ENCODE measurements at regions of chr20 and their contacts with region 1.

Region 1: GRCh38 chr20:54668271-54669039 is 193.1 kb downstream of the DOK5 start:
- DNase-seq: peak; percentile 34
- H3K4me3 ChIP-seq: no peak overlapping the region
- H3K27ac ChIP-seq: no peak overlapping the region
- H3K4me1 ChIP-seq: no peaks in the 10 kb centered on the region
- H3K27me3 ChIP-seq: no peaks in the 10 kb centered on the region
- CTCF ChIP-seq: peak; percentile 68 to 84
- POLR2A ChIP-seq: no peak

Region 2: DNA sequence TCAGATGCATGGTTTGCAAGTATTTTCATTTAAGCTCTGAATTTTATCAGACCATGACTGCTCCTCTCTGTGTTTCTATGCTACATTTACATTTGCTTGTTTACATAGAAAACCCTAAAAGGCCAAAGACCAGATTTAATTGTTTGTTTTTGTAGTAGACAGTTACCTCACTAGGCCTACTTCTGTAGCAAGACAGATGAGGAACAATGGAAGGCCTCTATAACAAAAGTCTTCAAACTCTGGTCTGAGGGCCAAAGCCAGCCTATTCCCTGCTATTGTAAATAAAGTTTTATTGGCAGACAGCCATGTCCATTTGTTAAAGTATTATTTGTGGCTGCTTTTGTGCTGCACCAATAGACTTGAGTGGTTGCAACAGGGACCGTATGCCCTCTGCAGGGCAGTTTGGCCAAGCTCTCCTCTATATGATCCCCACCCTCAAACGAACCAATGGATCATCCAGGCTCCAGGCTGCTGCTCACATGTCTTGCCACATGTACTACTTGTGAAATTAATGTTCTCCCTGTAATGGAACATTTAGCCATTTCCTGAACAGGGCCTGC is 11.1 kb before region 1 on chr20:
- CTCF ChIA-PET with region 1: interaction called, 17 read pairs
- POLR2A ChIA-PET with region 1: no interaction called
- dilution Hi-C with region 1: no loop called
- intact Hi-C with region 1: no loop called
- DNase-seq: no peak
- H3K4me3 ChIP-seq: no peak overlapping the region
- H3K27ac ChIP-seq: no peak overlapping the region
- H3K4me1 ChIP-seq: no peaks in the 10 kb centered on the region
- H3K27me3 ChIP-seq: peaks cover 0 to 5% of the 10 kb centered on the region in 2 experiments
- CTCF ChIP-seq: no peak
- POLR2A ChIP-seq: no peak

Region 3: GRCh38 chr20:56247948-56248782 is 1579.7 kb after region 1 on chr20 and contains the start of gene MC3R:
- CTCF ChIA-PET with region 1: no interaction called
- POLR2A ChIA-PET with region 1: no interaction called
- dilution Hi-C with region 1: no loop called
- intact Hi-C with region 1: loop called (anchors 5 kb)
- DNase-seq: peak; percentile 2
- H3K4me3 ChIP-seq: no peak within 1 kb of the TSS
- H3K27ac ChIP-seq: no peak within 1 kb of the TSS
- H3K4me1 ChIP-seq: no peaks in the 10 kb centered on the region
- H3K27me3 ChIP-seq: no peaks in the 10 kb centered on the region
- CTCF ChIP-seq: peak; percentile 33 to 61
- POLR2A ChIP-seq: no peak
- total RNA-seq, gene MC3R: not detected in 2 replicates

Region 4: GRCh38 chr20:56343861-56344381 is 1675.5 kb after region 1 on chr20:
- CTCF ChIA-PET with region 1: interaction called, 9 read pairs
- POLR2A ChIA-PET with region 1: no interaction called
- dilution Hi-C with region 1: no loop called
- intact Hi-C with region 1: loop called (anchors 5 kb)
- DNase-seq: peak; percentile 35
- H3K4me3 ChIP-seq: no peak overlapping the region
- H3K27ac ChIP-seq: no peak overlapping the region
- H3K4me1 ChIP-seq: no peaks in the 10 kb centered on the region
- H3K27me3 ChIP-seq: peaks cover 8 to 11% of the 10 kb centered on the region in 2 experiments
- CTCF ChIP-seq: peak; percentile 65 to 88
- POLR2A ChIP-seq: no peak